ENCODE measurements at regions of chr12 and their contacts with region 1.

Region 1: DNA sequence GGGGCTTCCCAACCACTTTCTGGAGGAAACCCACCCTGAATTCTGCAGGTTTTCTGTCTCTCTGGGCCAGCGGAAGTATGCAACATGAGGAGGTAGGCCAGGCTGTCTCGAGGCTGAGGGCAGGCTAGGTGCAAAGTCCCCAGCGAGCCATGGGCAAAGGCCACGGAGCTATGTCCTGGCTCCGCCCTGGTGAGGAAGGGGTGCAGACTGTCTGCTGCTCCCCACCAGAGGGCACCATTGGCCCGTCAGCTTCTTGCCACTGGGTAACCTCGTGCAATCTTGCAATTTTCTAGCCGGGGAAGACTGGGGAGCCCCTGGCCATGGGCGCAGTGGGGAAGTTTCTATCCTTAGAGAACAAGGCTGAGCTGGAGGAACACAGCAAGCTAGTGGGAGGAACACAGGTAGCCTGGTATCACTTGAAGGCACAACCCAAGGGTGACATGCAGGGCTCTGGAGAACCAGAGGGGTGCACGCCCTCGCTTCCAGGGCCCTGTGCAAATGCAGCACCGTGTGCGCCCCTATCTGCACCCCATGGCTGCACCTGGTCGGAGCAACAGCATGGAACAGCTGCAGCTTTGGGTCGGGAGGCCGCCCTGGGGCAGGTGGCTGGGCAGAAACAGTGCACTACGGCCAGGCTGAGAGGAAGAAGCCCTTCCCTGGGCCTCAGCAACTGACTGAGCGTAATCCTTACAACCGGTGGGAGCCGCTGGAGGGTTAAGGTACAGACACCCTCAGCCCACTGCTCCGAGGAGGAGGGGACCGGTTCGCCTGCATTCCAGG is 27.6 kb upstream of the RPLP0 start:
- DNase-seq: peak; percentile 74
- ATAC-seq: peak; percentile 93
- H3K4me3 Mint-ChIP-seq: no peak overlapping the region
- H3K27ac Mint-ChIP-seq: no peak overlapping the region
- H3K4me1 Mint-ChIP-seq: peaks cover 44% of the 10 kb centered on the region
- H3K27me3 Mint-ChIP-seq: peaks cover 25% of the 10 kb centered on the region
- CTCF ChIP-seq: peak; percentile 39

Region 2: DNA sequence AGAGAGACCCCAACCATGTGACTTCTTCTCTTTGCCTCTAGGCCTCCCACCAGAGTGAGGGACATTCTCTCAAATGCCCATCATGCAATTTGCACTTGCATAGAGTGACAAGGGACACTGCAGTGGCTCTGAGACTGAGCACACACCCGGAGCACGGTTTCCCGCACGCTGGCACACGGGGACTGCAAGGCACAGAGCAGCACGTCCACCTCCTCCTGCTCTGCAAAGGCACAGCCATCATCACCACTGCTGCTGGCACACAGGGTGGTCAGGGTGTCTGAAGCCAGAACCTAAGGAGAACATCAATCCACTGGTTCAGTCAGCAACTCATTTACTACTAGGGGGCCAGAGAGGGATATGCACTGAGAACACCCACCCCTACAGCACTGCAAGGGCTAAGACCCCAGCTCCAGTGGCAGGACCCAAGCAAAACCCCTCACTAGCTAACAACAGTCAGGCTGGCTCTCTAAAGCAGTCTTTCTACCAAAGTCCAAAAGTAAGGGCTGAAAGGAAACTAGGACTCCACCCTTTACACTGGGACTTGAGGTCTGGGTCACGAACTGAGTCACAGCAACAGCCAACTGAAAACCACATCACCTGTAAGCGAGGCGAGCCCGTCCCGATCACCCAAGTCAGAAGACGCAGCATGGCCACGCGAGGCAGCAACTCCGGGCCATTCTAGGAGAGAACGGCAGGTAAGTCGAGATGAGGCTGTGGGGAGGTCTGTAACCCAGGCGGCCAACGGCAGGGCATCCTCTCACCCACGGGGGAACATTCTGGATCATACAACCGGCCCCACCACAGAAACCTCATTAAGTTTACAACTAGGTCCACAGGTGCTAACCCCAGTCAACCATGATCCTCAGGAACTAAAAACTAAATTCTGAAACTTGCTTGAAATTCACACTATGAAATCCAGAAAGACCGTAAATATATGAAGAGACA is 71.9 kb before region 1 on chr12:
- CTCF ChIA-PET with region 1: no interaction called
- POLR2A ChIA-PET with region 1: no interaction called
- intact Hi-C with region 1: no loop called
- DNase-seq: no peak
- ATAC-seq: no peak
- H3K4me3 Mint-ChIP-seq: no peak overlapping the region
- H3K27ac Mint-ChIP-seq: no peak overlapping the region
- H3K4me1 Mint-ChIP-seq: no peaks in the 10 kb centered on the region
- H3K27me3 Mint-ChIP-seq: no peaks in the 10 kb centered on the region
- CTCF ChIP-seq: no peak

Region 3: DNA sequence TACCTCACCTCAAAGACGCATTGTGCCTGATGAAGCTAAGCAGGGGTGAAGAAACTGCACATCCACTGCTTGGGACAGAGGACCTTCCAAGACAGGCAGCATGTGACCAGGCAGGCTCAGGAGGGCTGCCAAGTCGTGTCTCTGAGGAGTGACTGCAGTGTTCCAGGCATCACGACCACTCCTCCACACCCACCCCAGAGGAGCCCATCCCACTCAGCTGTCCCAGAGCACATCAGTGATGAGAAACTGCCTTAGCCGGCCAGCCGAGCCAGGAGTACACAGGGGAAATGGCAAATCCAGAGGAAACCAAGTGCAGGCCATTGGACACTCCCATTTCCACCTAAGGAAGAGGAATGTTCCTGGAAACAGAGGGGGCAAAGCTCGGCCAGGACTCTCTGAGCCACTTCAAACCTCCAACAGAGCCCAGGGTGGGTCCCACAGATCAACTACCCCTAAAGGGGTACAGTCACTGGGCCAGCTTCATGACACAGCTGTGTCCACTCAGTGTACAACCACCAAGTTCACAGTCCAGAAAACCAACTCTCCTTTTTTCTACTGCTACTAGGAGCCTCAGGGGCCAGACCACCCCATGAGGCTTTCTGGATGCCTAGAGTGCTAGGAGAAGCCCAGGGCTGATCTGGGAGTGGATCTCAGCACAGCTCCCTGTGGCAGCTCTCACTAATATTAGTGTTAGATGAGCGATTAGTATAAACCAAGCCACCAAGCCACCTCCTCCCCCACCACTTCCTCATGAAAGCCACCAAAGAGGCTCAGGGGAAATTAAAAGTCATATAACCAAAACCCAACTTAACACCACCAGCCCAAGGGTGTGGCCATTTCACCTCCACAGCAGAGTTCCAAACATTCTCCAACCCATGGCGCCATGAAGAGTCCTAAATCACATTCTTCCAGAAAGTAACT is 21.7 kb after region 1 on chr12:
- CTCF ChIA-PET with region 1: interaction called, 12 read pairs
- POLR2A ChIA-PET with region 1: interaction called, 10 read pairs
- intact Hi-C with region 1: loop called (anchors 2 kb)
- DNase-seq: no peak
- ATAC-seq: peak; percentile 69
- H3K4me3 Mint-ChIP-seq: no peak overlapping the region
- H3K27ac Mint-ChIP-seq: no peak overlapping the region
- H3K4me1 Mint-ChIP-seq: peaks cover 52% of the 10 kb centered on the region
- H3K27me3 Mint-ChIP-seq: peaks cover 32% of the 10 kb centered on the region
- CTCF ChIP-seq: no peak

Region 4: GRCh38 chr12:120257041-120257821 is 28.8 kb after region 1 on chr12:
- CTCF ChIA-PET with region 1: interaction called, 243 read pairs
- POLR2A ChIA-PET with region 1: interaction called, 52 read pairs
- intact Hi-C with region 1: no loop called
- DNase-seq: no peak
- ATAC-seq: no peak
- H3K4me3 Mint-ChIP-seq: no peak overlapping the region
- H3K27ac Mint-ChIP-seq: no peak overlapping the region
- H3K4me1 Mint-ChIP-seq: peaks cover 29% of the 10 kb centered on the region
- H3K27me3 Mint-ChIP-seq: peaks cover 40% of the 10 kb centered on the region
- CTCF ChIP-seq: no peak

Region 5: GRCh38 chr12:120265473-120266179 is 37.1 kb after region 1 on chr12 and contains the start of gene PXN:
- CTCF ChIA-PET with region 1: interaction called, 243 read pairs
- POLR2A ChIA-PET with region 1: interaction called, 52 read pairs
- intact Hi-C with region 1: loop called (anchors 1 kb)
- DNase-seq: peak; percentile 87
- ATAC-seq: peak; percentile 95
- H3K4me3 Mint-ChIP-seq: peak within 1 kb of the TSS; percentile 86
- H3K27ac Mint-ChIP-seq: peak within 1 kb of the TSS; percentile 59
- H3K4me1 Mint-ChIP-seq: peaks cover 18% of the 10 kb centered on the region
- H3K27me3 Mint-ChIP-seq: peaks cover 20% of the 10 kb centered on the region
- CTCF ChIP-seq: no peak
- total RNA-seq, gene PXN: 1.7 and 2.9 TPM in 2 replicates

Region 6: GRCh38 chr12:120286796-120287465 is 58.5 kb after region 1 on chr12:
- CTCF ChIA-PET with region 1: interaction called, 26 read pairs
- POLR2A ChIA-PET with region 1: interaction called, 202 read pairs
- intact Hi-C with region 1: loop called (anchors 1 kb)
- DNase-seq: no peak
- ATAC-seq: no peak
- H3K4me3 Mint-ChIP-seq: no peak overlapping the region
- H3K27ac Mint-ChIP-seq: no peak overlapping the region
- H3K4me1 Mint-ChIP-seq: peaks cover 13% of the 10 kb centered on the region
- H3K27me3 Mint-ChIP-seq: peaks cover under 1% of the 10 kb centered on the region
- CTCF ChIP-seq: no peak

Region 7: DNA sequence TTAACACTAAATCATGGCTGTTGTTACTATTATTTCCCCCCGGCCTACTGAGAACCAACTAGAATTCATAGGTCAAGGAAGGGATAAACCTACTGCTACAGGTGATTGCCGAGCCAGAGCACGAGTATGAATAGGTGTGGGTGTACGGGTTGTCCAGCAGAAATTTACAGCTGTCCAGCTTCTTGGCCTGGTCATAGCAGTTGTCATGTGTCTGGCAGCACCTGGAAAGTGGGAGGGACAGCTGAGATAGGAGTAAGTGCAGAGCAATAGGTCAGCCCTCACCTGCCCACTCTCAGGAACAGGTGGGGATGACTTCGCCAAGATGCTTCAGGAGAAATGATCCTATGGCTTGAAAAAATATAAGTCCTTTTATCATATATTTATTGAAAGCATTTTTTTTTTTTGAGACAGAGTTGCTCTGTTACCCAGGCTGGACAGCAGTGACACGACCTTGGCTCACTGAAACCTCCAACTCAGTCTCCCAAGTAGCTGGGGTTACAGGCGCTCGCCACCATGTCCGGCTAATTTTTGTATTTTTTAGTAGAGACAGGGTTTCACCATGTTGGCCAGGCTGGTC is 96.4 kb after region 1 on chr12:
- CTCF ChIA-PET with region 1: interaction called, 4 read pairs
- POLR2A ChIA-PET with region 1: interaction called, 3 read pairs
- intact Hi-C with region 1: loop called (anchors 1 kb)
- DNase-seq: no peak
- ATAC-seq: no peak
- H3K4me3 Mint-ChIP-seq: peak overlapping the region; percentile 83
- H3K27ac Mint-ChIP-seq: no peak overlapping the region
- H3K4me1 Mint-ChIP-seq: peaks cover 7% of the 10 kb centered on the region
- H3K27me3 Mint-ChIP-seq: peaks cover 9% of the 10 kb centered on the region
- CTCF ChIP-seq: no peak

Region 8: DNA sequence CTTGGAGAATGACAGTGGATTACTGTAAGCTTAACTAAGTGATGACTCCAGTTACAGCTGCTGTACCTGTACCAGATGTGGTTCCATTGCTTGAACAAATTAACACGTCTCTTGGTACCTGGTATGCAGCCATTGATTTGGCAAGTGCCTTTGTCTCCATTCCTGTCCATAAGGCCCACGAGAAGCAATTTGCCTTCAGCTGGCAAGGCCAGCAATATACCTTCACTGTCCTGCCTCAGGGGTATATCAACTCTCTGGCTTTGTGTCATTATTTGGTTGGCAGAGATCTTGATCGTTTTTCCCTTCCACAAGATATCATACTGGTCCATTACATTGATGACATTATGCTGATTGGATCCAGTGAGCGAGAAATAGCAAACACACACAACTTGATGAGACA is 382.1 kb after region 1 on chr12:
- CTCF ChIA-PET with region 1: no interaction called
- POLR2A ChIA-PET with region 1: no interaction called
- intact Hi-C with region 1: no loop called
- DNase-seq: no peak
- ATAC-seq: no peak
- H3K4me3 Mint-ChIP-seq: no peak overlapping the region
- H3K27ac Mint-ChIP-seq: no peak overlapping the region
- H3K4me1 Mint-ChIP-seq: no peaks in the 10 kb centered on the region
- H3K27me3 Mint-ChIP-seq: peaks cover 3% of the 10 kb centered on the region
- CTCF ChIP-seq: no peak

Measured in activated B cell treated with CpG ODN at 0.5 μM for 24 hours (primary cell).